ENCODE measurements at regions of chr6 and their contacts with region 1.

Region 1: GRCh38 chr6:2791124-2791974 is 26.2 kb downstream of the WRNIP1 start:
- DNase-seq: peak; percentile 74
- H3K4me3 Mint-ChIP-seq: no peak overlapping the region
- H3K27ac Mint-ChIP-seq: peak overlapping the region; percentile 48
- H3K4me1 Mint-ChIP-seq: peaks cover 37% of the 10 kb centered on the region
- H3K27me3 Mint-ChIP-seq: no peaks in the 10 kb centered on the region

Region 2: GRCh38 chr6:2841264-2842138 is 50.2 kb after region 1 on chr6 and contains the start of gene SERPINB1:
- CTCF ChIA-PET with region 1: interaction called, 9 read pairs
- POLR2A ChIA-PET with region 1: interaction called, 11 read pairs
- DNase-seq: peak; percentile 77
- H3K4me3 Mint-ChIP-seq: peak within 1 kb of the TSS; percentile 86
- H3K27ac Mint-ChIP-seq: peak within 1 kb of the TSS; percentile 91
- H3K4me1 Mint-ChIP-seq: peaks cover 68% of the 10 kb centered on the region
- H3K27me3 Mint-ChIP-seq: no peaks in the 10 kb centered on the region
- total RNA-seq, gene SERPINB1: 62.8 to 72.8 TPM

Region 3: GRCh38 chr6:2911171-2911570 is 119.8 kb after region 1 on chr6:
- CTCF ChIA-PET with region 1: interaction called, 10 read pairs
- POLR2A ChIA-PET with region 1: no interaction called
- DNase-seq: no peak
- H3K4me3 Mint-ChIP-seq: no peak overlapping the region
- H3K27ac Mint-ChIP-seq: no peak overlapping the region
- H3K4me1 Mint-ChIP-seq: peaks cover 39% of the 10 kb centered on the region
- H3K27me3 Mint-ChIP-seq: no peaks in the 10 kb centered on the region

Region 4: DNA sequence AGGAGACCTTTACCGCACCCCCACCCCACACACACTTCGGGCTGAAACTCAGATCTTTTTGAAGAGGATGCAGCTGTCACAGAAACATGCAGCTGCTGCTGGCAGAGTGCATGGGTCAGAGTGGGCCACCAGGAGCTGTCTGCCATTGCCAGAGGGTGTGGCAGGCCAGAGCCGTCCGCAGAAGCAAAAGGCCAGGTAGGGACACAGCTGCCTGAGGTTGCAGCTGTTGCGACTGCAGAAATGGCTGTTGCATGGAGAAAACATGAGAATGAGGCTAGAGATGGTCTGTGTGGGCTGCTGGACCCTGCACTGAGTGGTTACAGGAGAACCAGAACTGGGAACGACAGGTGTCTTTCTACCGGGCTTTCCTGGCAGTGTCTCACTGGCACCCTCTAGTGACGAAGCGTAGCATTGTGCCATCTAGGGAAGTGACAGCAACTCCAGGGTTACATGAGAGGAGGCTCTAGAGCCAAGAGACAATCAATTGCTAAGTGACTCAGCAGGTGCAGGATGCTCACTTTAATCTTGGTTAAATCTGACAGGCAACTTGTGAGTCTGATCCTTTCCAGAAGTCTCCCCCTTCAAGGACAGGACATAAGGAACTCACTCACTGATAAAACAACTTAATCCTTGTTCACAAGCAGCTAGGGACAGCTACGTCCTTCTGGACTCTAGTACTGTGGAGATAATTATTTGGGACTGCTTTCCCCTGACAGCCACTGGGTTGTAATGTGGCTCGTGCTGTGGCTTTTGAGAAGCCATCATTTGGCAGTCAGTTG is 140.8 kb after region 1 on chr6:
- CTCF ChIA-PET with region 1: interaction called, 13 read pairs
- POLR2A ChIA-PET with region 1: interaction called, 3 read pairs
- DNase-seq: peak; percentile 90
- H3K4me3 Mint-ChIP-seq: no peak overlapping the region
- H3K27ac Mint-ChIP-seq: peak overlapping the region; percentile 48
- H3K4me1 Mint-ChIP-seq: peaks cover 24% of the 10 kb centered on the region
- H3K27me3 Mint-ChIP-seq: no peaks in the 10 kb centered on the region

Region 5: DNA sequence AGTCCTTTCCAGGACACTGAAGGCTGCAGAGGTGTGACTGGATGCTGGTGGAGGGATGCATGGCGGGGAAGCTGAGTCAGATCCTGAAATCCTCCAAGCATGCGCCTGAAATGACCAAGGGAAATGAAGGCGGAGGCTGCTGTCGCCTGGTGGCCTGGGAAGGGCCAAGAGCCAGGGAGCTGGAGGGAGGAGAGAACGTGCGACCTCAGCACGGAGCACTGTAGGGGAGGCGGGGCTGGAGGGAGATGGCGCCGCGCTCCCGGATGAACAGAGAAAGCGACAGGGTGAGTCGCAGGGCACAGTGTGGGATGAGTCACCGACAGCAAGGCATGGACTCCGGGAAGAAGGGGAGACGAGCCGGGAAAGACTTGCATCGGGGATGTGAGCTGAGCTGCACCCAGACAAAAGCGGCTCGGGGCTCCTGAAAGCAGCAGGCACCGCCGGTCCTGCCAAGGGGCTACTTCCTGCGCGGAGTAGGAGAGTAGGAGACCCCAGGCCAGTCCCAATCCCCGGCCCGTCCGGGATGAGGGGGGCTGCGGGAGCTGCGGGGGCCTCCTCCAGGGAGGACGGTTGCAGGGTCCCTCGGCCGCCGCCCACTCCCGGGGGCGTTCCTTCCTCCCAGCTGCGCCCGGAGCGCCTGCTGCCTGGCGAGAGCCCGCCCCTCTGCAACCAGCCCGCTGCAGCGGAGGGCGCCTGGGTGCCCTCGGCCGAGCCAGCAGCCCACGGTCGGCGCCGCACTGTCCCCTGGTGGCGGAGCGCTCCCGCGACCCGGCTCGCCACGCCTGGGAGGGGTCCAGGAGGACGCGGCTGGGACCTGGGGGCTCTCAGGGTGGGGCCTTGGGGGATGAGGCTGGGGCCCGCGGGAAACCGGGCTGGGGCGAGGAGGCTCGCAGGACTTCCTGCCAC is 197.3 kb after region 1 on chr6:
- CTCF ChIA-PET with region 1: interaction called, 21 read pairs
- POLR2A ChIA-PET with region 1: no interaction called
- DNase-seq: peak; percentile 76
- H3K4me3 Mint-ChIP-seq: peak overlapping the region; percentile 87
- H3K27ac Mint-ChIP-seq: peak overlapping the region; percentile 98
- H3K4me1 Mint-ChIP-seq: peaks cover 27% of the 10 kb centered on the region
- H3K27me3 Mint-ChIP-seq: peaks cover 3% of the 10 kb centered on the region

Region 6: GRCh38 chr6:3209114-3210023 is 418.0 kb after region 1 on chr6:
- CTCF ChIA-PET with region 1: no interaction called
- POLR2A ChIA-PET with region 1: no interaction called
- DNase-seq: no peak
- H3K4me3 Mint-ChIP-seq: no peak overlapping the region
- H3K27ac Mint-ChIP-seq: no peak overlapping the region
- H3K4me1 Mint-ChIP-seq: peaks cover 11% of the 10 kb centered on the region
- H3K27me3 Mint-ChIP-seq: peaks cover 6% of the 10 kb centered on the region

Region 7: GRCh38 chr6:4660377-4661321 is 1869.3 kb after region 1 on chr6:
- CTCF ChIA-PET with region 1: no interaction called
- POLR2A ChIA-PET with region 1: no interaction called
- DNase-seq: no peak
- H3K4me3 Mint-ChIP-seq: no peak overlapping the region
- H3K27ac Mint-ChIP-seq: no peak overlapping the region
- H3K4me1 Mint-ChIP-seq: no peaks in the 10 kb centered on the region
- H3K27me3 Mint-ChIP-seq: peaks cover 2% of the 10 kb centered on the region